ENCODE measurements at regions of chr11 and their contacts with region 1.

Region 1: GRCh38 chr11:6458352-6459098 is 15.2 kb downstream of the TRIM3 start:
- DNase-seq: no peak
- H3K4me3 ChIP-seq: no peak overlapping the region
- H3K4me3 Mint-ChIP-seq: no peak overlapping the region
- H3K27ac ChIP-seq: no peak overlapping the region
- H3K27ac Mint-ChIP-seq: peak overlapping the region in 2 of 7 donors; percentile 24 to 33
- H3K4me1 ChIP-seq: no peaks in the 10 kb centered on the region
- H3K4me1 Mint-ChIP-seq: no peaks in the 10 kb centered on the region
- H3K27me3 ChIP-seq: no peaks in the 10 kb centered on the region
- H3K27me3 Mint-ChIP-seq: no peaks in the 10 kb centered on the region

Region 2: GRCh38 chr11:6362873-6363678 is 95.4 kb before region 1 on chr11:
- CTCF ChIA-PET with region 1: interaction called, 10 read pairs
- POLR2A ChIA-PET with region 1: no interaction called
- intact Hi-C with region 1: no loop called
- DNase-seq: peak; percentile 42 to 59 (median 52)
- H3K4me3 ChIP-seq: no peak overlapping the region
- H3K4me3 Mint-ChIP-seq: no peak overlapping the region
- H3K27ac ChIP-seq: no peak overlapping the region
- H3K27ac Mint-ChIP-seq: no peak overlapping the region
- H3K4me1 ChIP-seq: no peaks in the 10 kb centered on the region
- H3K4me1 Mint-ChIP-seq: no peaks in the 10 kb centered on the region
- H3K27me3 ChIP-seq: no peaks in the 10 kb centered on the region
- H3K27me3 Mint-ChIP-seq: no peaks in the 10 kb centered on the region

Measured in CD4-positive, alpha-beta memory T cell (primary cell).